ENCODE measurements at regions of chr6 and their contacts with region 1.

Region 1: GRCh38 chr6:82205930-82206392 is 41.6 kb downstream of the IBTK start:
- H3K4me3 Mint-ChIP-seq: no peak overlapping the region
- H3K27ac Mint-ChIP-seq: peak overlapping the region; percentile 39
- H3K4me1 Mint-ChIP-seq: peaks cover 10% of the 10 kb centered on the region
- H3K27me3 Mint-ChIP-seq: no peaks in the 10 kb centered on the region

Region 2: GRCh38 chr6:81708113-81708699 is 497.8 kb before region 1 on chr6:
- intact Hi-C with region 1: no loop called
- H3K4me3 Mint-ChIP-seq: no peak overlapping the region
- H3K27ac Mint-ChIP-seq: no peak overlapping the region
- H3K4me1 Mint-ChIP-seq: no peaks in the 10 kb centered on the region
- H3K27me3 Mint-ChIP-seq: no peaks in the 10 kb centered on the region

Region 3: DNA sequence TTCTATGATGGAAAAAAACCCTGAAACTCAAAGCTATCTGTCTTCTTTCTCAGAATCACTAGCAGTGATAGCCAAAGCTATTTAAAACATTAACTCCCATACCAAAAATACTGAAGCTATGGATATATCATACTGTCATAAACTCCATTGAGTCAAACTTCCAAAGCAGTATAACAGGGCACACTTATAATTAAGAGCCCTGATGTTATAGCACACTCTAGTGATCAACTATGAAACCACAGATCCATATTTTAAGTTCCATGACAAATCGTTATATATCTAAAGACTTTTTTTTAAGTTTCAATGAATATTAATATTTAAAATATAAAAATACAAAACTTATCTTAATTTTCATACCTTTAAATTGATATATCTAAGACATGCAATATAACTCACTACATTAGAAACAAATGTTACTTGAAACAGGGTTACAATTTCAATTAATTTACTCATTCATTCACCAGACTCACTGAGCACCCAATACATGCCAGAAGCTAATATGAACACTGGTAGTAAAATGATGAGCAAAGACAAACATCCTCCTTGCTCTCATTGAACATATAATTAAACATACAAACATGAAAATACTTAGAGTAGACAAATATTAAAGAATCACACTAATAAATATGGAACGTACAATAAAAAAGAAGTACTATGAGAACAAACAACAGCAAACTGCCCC is 27.7 kb before region 1 on chr6:
- intact Hi-C with region 1: no loop called
- H3K4me3 Mint-ChIP-seq: no peak overlapping the region
- H3K27ac Mint-ChIP-seq: no peak overlapping the region
- H3K4me1 Mint-ChIP-seq: no peaks in the 10 kb centered on the region
- H3K27me3 Mint-ChIP-seq: no peaks in the 10 kb centered on the region

Region 4: DNA sequence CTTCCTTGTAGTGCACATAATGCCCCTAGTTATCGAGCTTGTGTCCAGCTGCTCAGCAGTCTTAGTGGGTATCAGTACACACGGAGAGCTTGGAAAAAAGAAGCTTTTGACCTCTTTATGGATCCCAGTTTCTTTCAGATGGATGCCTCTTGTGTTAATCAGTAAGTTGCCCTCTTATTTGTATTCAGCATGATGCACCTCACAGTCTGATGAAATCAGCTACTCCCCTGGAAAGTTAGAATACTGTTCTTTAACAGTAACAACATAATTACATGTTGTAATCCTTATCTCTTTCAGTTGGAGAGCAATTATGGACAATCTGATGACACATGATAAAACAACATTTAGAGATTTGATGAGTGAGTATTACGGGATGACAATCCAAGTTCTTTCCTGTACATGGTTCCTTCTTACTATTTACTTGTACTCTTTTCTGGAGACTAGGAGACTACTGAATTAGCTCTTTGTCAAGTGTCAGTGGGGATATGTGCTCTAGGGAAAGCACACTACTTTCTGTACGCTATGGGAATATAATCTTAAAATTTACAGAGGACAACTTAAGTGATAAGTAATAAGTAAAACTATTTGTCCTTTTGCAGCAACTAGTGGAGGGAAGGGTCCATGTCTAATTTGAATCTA is 948.0 kb after region 1 on chr6:
- intact Hi-C with region 1: loop called (anchors 10 kb)
- H3K4me3 Mint-ChIP-seq: no peak overlapping the region
- H3K27ac Mint-ChIP-seq: no peak overlapping the region
- H3K4me1 Mint-ChIP-seq: no peaks in the 10 kb centered on the region
- H3K27me3 Mint-ChIP-seq: no peaks in the 10 kb centered on the region

Measured in dendritic cell treated with granulocyte-macrophage colony-stimulating factor and Interleukin-4, amounts not matched to agents 40 ng/mL and 50 ng/mL, for 4 days (primary cell).